ENCODE measurements at regions of chr11 and their contacts with region 1.

Region 1: GRCh38 chr11:111841370-111842053 is 29.9 kb downstream of the ALG9 start:
- DNase-seq: peak in 1 of 2 donors; percentile 89
- H3K4me3 ChIP-seq: no peak overlapping the region
- H3K27ac ChIP-seq: peak overlapping the region; percentile 29
- H3K4me1 ChIP-seq: no peaks in the 10 kb centered on the region
- H3K27me3 ChIP-seq: no peaks in the 10 kb centered on the region
- CTCF ChIP-seq: peak; percentile 83 to 94 (median 93)
- POLR2A ChIP-seq: no peak

Region 2: DNA sequence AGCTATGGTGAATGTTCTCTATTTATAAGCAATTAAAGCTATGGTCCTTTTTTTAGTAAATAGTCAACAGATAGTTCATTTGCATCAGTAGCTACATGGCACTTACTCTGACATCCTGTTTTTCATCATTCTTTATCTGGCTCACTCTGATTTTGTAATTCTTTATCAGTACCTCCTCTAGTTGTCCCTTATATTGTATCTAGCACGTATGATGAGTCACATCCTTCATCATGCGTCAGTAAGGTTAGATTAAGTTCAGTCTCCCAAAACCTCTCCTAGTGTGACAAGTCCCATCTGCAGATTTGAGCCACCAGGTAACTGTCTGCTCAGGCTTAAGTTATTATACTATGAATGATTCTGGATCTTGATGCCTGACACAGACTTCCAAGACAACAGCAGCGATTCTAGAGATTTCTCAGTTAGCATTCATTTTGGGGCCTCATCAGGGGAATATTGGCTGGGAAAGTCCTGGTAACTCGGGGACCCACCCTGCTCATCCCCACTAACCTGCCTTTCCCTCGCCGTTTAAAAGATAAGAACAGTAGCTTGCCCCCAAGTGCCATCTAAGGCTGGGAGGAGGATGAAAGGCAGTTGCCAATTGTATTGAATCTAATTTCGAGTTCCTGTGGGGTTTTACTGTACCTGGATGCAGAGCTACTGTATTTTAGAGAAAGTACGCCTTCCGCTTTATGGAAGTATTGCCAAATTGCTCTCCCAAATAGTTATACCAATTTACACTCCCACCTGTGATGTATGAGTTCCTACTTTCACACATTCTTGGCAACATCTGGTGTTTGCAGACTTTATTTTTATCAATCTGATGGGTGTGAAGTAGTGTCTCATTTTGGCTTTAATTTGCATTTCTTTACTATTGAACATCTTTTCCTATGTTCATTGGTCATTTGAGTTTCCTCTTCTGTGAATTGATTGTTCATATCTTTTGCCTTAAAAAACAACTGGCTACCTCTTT is 1692.5 kb before region 1 on chr11:
- intact Hi-C with region 1: loop called (anchors 5 kb)
- DNase-seq: no peak
- H3K4me3 ChIP-seq: no peak overlapping the region
- H3K27ac ChIP-seq: no peak overlapping the region
- H3K4me1 ChIP-seq: peaks cover 15% of the 10 kb centered on the region
- H3K27me3 ChIP-seq: no peaks in the 10 kb centered on the region
- CTCF ChIP-seq: no peak
- POLR2A ChIP-seq: no peak

Region 3: GRCh38 chr11:111582163-111582562 is 259.3 kb before region 1 on chr11:
- intact Hi-C with region 1: loop called (anchors 5 kb)
- DNase-seq: no peak
- H3K4me3 ChIP-seq: no peak overlapping the region
- H3K27ac ChIP-seq: no peak overlapping the region
- H3K4me1 ChIP-seq: no peaks in the 10 kb centered on the region
- H3K27me3 ChIP-seq: no peaks in the 10 kb centered on the region
- CTCF ChIP-seq: no peak
- POLR2A ChIP-seq: no peak

Region 4: GRCh38 chr11:111601979-111602864 is 239.3 kb before region 1 on chr11 and contains the start of gene SIK2:
- intact Hi-C with region 1: loop called (anchors 5 kb)
- DNase-seq: peak in 1 of 2 donors; percentile 97
- H3K4me3 ChIP-seq: peak within 1 kb of the TSS; percentile 66 to 77
- H3K27ac ChIP-seq: peak within 1 kb of the TSS; percentile 94
- H3K4me1 ChIP-seq: peaks cover 33% of the 10 kb centered on the region
- H3K27me3 ChIP-seq: no peaks in the 10 kb centered on the region
- CTCF ChIP-seq: peak; percentile 60 to 95 (median 93)
- POLR2A ChIP-seq: no peak
- total RNA-seq, gene SIK2: 16.7 TPM

Region 5: DNA sequence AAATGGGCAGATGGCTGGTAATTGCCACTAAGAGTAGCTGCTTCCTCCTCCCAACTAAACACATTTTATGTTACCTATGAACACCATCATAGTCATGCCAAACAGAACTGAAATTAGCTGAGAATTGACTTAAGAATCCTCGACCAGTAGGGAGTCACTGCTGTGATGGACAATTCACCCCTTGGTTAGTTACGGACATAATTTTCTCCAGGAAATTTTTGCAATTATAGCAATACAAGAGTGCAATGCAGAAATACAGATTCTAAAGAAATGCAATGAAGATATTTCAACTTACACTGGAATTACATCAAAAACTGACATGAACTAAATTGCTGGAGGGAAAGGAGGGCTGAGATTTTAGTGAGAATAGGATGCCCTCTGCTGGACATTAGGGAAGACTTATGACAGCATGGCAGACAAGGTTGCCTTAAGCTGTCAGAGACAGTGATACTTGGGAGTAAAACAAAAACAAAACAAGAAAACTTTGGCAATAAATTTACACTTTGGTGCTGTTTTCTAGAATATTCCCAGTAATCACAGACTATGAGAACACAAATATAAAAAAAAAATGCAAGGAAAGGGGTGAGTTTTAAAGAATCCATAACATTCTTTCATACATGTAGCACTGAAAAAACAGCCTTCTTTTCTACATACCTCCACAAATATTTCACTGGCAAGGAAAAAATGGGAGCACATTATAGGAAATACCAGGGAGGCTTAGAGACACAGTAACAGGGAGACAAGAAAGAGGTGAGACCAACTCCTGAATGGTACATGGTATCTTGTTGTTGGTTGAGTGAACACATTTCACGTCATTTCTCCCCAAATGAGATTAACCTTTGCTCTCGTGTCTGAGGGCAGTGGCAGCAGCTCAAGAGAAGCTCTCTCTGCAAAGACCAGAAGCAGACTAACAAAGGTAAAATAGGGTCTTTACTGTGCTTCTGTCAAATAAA is 64.1 kb before region 1 on chr11:
- intact Hi-C with region 1: loop called (anchors 5 kb)
- DNase-seq: no peak
- H3K4me3 ChIP-seq: no peak overlapping the region
- H3K27ac ChIP-seq: no peak overlapping the region
- H3K4me1 ChIP-seq: no peaks in the 10 kb centered on the region
- H3K27me3 ChIP-seq: no peaks in the 10 kb centered on the region
- CTCF ChIP-seq: peak; percentile 51 to 90 (median 84)
- POLR2A ChIP-seq: no peak

Region 6: GRCh38 chr11:111860257-111860656 is 18.7 kb after region 1 on chr11:
- intact Hi-C with region 1: no loop called
- DNase-seq: no peak
- H3K4me3 ChIP-seq: no peak overlapping the region
- H3K27ac ChIP-seq: no peak overlapping the region
- H3K4me1 ChIP-seq: no peaks in the 10 kb centered on the region
- H3K27me3 ChIP-seq: no peaks in the 10 kb centered on the region
- CTCF ChIP-seq: no peak
- POLR2A ChIP-seq: no peak

Region 7: GRCh38 chr11:112241486-112241885 is 400.0 kb after region 1 on chr11:
- intact Hi-C with region 1: no loop called
- DNase-seq: peak in 1 of 2 donors; percentile 87
- H3K4me3 ChIP-seq: no peak overlapping the region
- H3K27ac ChIP-seq: peak overlapping the region; percentile 40
- H3K4me1 ChIP-seq: peaks cover 4% of the 10 kb centered on the region
- H3K27me3 ChIP-seq: no peaks in the 10 kb centered on the region
- CTCF ChIP-seq: no peak
- POLR2A ChIP-seq: no peak